ENCODE measurements at regions of chr7 and their contacts with region 1.

Region 1: GRCh38 chr7:29408841-29409243 is 154.8 kb upstream of the PRR15 start:
- DNase-seq: peak; percentile 65 to 70 (median 67)
- ATAC-seq: peak; percentile 88
- H3K4me3 ChIP-seq: no peak overlapping the region
- H3K27ac ChIP-seq: no peak overlapping the region
- H3K4me1 ChIP-seq: no peaks in the 10 kb centered on the region
- H3K27me3 ChIP-seq: peaks cover 8 to 12% of the 10 kb centered on the region in 2 experiments; a peak in 2 of 5 replicates
- CTCF ChIP-seq: peak; percentile 71 to 86 (median 76)
- EP300 ChIP-seq: no peak
- POLR2A ChIP-seq: no peak
- RAD21 ChIP-seq: peak; percentile 79 to 90

Region 2: DNA sequence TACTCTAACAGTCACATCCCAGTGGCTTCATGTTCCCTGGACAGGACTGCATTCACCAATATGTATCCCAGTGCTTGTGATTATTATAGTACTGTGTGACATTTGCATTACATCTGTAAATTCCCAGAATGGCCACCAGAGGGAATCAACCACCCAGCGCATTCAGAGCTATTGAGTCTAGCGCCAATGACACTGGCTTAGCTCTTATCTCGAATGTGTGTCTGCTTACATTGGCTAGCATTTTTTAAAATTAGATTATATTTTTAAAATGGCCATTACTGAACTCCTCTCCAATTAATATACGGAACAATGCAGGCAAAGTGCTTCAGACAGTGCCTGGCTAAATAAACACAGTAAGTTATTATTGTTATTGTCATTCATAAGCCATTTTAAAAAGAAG is 487.0 kb before region 1 on chr7:
- CTCF ChIA-PET with region 1: interaction called, 21 read pairs
- POLR2A ChIA-PET with region 1: interaction called, 4 read pairs
- in situ Hi-C with region 1: loop called (anchors 5 kb)
- intact Hi-C with region 1: loop called (anchors 1 kb)
- DNase-seq: peak; percentile 57 to 64 (median 60)
- ATAC-seq: peak; percentile 98
- H3K4me3 ChIP-seq: no peak overlapping the region
- H3K27ac ChIP-seq: no peak overlapping the region
- H3K4me1 ChIP-seq: no peaks in the 10 kb centered on the region
- H3K27me3 ChIP-seq: peaks cover 0 to 7% of the 10 kb centered on the region in 2 experiments; a peak in 2 of 5 replicates
- CTCF ChIP-seq: peak; percentile 74 to 82 (median 77)
- EP300 ChIP-seq: no peak
- POLR2A ChIP-seq: no peak
- RAD21 ChIP-seq: peak; percentile 31 to 62

Region 3: GRCh38 chr7:29105752-29106668 is 302.8 kb before region 1 on chr7:
- CTCF ChIA-PET with region 1: interaction called, 3 read pairs
- POLR2A ChIA-PET with region 1: no interaction called
- in situ Hi-C with region 1: loop called (anchors 10 kb)
- intact Hi-C with region 1: loop called (anchors 5 kb)
- DNase-seq: peak in 1 of 4 experiments; percentile 46
- ATAC-seq: peak; percentile 84
- H3K4me3 ChIP-seq: no peak overlapping the region
- H3K27ac ChIP-seq: no peak overlapping the region
- H3K4me1 ChIP-seq: no peaks in the 10 kb centered on the region
- H3K27me3 ChIP-seq: no peaks in the 10 kb centered on the region
- CTCF ChIP-seq: peak; percentile 62 to 79 (median 63)
- EP300 ChIP-seq: no peak
- POLR2A ChIP-seq: no peak
- RAD21 ChIP-seq: peak; percentile 51 to 66

Region 4: GRCh38 chr7:29113384-29114103 is 295.3 kb before region 1 on chr7:
- CTCF ChIA-PET with region 1: interaction called, 3 read pairs
- POLR2A ChIA-PET with region 1: no interaction called
- in situ Hi-C with region 1: loop called (anchors 10 kb)
- intact Hi-C with region 1: loop called (anchors 5 kb)
- DNase-seq: peak in 1 of 4 experiments; percentile 8
- ATAC-seq: 0 out of 3 replicates have a peak, but pooled peaks have one; percentile 37
- H3K4me3 ChIP-seq: no peak overlapping the region
- H3K27ac ChIP-seq: no peak overlapping the region
- H3K4me1 ChIP-seq: no peaks in the 10 kb centered on the region
- H3K27me3 ChIP-seq: no peaks in the 10 kb centered on the region
- CTCF ChIP-seq: peak; percentile 28 to 29 (median 28); a peak in 2 of 6 replicates
- EP300 ChIP-seq: no peak
- POLR2A ChIP-seq: no peak
- RAD21 ChIP-seq: peak in 1 of 2 experiments; percentile 41; a peak in 2 of 4 replicates

Region 5: DNA sequence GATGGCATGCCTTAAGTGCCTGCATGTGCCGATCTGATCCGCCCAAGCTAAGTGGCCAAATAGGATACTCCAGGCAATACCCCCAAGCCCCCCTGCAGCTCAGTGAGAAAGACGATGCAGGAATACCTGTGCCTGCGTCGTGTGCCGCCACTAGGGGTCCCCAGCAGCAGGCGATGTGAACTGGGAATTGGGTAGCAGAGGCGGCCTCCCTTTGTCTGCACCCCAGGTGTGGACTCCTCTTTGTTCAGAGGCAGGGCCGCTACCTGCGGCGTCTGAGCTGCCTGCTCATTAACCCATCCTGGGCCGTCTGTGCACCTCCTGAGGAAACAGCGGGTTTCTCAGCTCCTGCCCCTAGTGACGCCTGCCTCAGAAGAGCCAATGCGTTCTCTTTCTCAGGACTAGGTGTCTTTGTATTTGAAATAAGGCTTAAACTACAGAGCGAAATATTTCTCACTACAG is 219.1 kb before region 1 on chr7:
- CTCF ChIA-PET with region 1: no interaction called
- POLR2A ChIA-PET with region 1: no interaction called
- in situ Hi-C with region 1: loop called (anchors 10 kb)
- intact Hi-C with region 1: loop called (anchors 2 kb)
- DNase-seq: peak; percentile 38 to 54 (median 44)
- ATAC-seq: peak; percentile 96
- H3K4me3 ChIP-seq: no peak overlapping the region
- H3K27ac ChIP-seq: no peak overlapping the region
- H3K4me1 ChIP-seq: peaks cover 0 to 6% of the 10 kb centered on the region in 2 experiments; a peak in 2 of 5 replicates
- H3K27me3 ChIP-seq: peaks cover 10 to 14% of the 10 kb centered on the region in 2 experiments; a peak in 3 of 5 replicates
- CTCF ChIP-seq: peak; percentile 67 to 75 (median 74)
- EP300 ChIP-seq: no peak
- POLR2A ChIP-seq: no peak
- RAD21 ChIP-seq: peak; percentile 20 to 51; a peak in 2 of 4 replicates

Region 6: DNA sequence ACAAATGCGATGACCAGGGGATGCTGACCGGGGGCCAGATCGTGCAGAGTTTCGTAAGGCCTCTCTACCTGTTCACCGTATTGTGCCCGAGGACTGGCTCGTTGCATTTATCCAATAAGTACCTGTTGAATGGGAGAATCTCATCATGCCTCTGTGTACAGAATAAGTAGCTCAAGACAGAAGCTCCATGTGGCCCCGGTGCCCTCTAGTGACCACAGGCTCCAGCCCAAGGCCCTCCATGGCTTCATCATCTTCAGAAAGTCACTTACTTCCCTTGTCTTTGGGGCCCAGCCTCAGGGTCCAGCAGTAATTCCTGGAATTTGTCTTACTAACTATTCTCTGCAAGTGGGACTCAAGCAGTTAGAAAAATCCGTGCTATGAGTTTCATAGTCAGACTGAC is 63.2 kb before region 1 on chr7:
- CTCF ChIA-PET with region 1: no interaction called
- POLR2A ChIA-PET with region 1: no interaction called
- in situ Hi-C with region 1: no loop called
- intact Hi-C with region 1: no loop called
- DNase-seq: peak in 1 of 4 experiments; percentile 3
- ATAC-seq: no peak
- H3K4me3 ChIP-seq: no peak overlapping the region
- H3K27ac ChIP-seq: no peak overlapping the region
- H3K4me1 ChIP-seq: no peaks in the 10 kb centered on the region
- H3K27me3 ChIP-seq: no peaks in the 10 kb centered on the region; a peak in 1 of 5 replicates
- CTCF ChIP-seq: peak in 2 of 3 experiments; percentile 14 to 37; a peak in 2 of 6 replicates
- EP300 ChIP-seq: no peak
- POLR2A ChIP-seq: no peak
- RAD21 ChIP-seq: peak; percentile 7 to 22; a peak in 1 of 4 replicates

Measured in K562 (cell line).